ENCODE measurements at regions of chr5 and their contacts with region 1.

Region 1: GRCh38 chr5:132238169-132238744 is 10.6 kb upstream of the P4HA2 start:
- DNase-seq: peak; percentile 71 to 89 (median 81)
- H3K4me3 ChIP-seq: no peak overlapping the region
- H3K27ac ChIP-seq: no peak overlapping the region
- H3K4me1 ChIP-seq: no peaks in the 10 kb centered on the region
- H3K27me3 ChIP-seq: no peaks in the 10 kb centered on the region

Region 2: DNA sequence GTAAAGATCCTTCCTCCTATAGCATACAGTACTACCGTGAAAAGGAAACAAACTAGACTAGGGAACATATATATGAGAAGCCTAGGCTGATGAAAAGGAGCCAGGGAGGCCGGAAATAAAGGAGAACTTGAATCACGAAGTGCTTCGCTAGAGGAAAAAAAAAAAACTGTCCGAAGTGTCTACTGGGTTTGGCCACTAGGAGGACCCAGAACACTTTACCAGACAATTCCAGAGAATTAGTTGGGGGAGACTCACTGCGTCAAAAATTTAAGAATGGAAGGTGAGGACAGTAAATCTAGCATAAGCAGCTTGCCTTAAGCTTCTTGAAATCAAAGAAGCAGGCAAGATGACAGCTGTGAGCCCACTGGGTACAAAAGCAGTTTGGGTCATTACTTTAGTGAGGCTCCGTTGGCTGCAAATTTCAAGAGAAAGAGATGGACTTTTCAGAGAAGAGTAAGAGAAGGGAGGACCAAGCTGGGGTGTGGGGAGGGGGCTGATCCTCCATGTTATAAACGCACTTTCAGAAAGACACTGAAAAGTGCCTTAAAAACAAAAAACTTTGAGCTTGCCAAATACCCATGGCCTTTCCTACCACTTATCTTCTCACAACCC is 58.0 kb before region 1 on chr5:
- CTCF ChIA-PET with region 1: interaction called, 12 read pairs
- POLR2A ChIA-PET with region 1: no interaction called
- DNase-seq: peak; percentile 63 to 81 (median 78)
- H3K4me3 ChIP-seq: no peak overlapping the region
- H3K27ac ChIP-seq: peak overlapping the region in 1 of 2 experiments; percentile 54
- H3K4me1 ChIP-seq: peaks cover 0 to 21% (median 13%) of the 10 kb centered on the region in 4 experiments
- H3K27me3 ChIP-seq: no peaks in the 10 kb centered on the region

Region 3: GRCh38 chr5:132225165-132226032 is 12.9 kb before region 1 on chr5:
- CTCF ChIA-PET with region 1: interaction called, 19 read pairs
- POLR2A ChIA-PET with region 1: interaction called, 3 read pairs
- DNase-seq: peak in 2 of 3 donors; percentile 9 to 25
- H3K4me3 ChIP-seq: no peak overlapping the region
- H3K27ac ChIP-seq: no peak overlapping the region
- H3K4me1 ChIP-seq: peaks cover 0 to 23% (median 19%) of the 10 kb centered on the region in 4 experiments
- H3K27me3 ChIP-seq: peaks cover 0 to 20% (median 13%) of the 10 kb centered on the region in 5 experiments

Region 4: DNA sequence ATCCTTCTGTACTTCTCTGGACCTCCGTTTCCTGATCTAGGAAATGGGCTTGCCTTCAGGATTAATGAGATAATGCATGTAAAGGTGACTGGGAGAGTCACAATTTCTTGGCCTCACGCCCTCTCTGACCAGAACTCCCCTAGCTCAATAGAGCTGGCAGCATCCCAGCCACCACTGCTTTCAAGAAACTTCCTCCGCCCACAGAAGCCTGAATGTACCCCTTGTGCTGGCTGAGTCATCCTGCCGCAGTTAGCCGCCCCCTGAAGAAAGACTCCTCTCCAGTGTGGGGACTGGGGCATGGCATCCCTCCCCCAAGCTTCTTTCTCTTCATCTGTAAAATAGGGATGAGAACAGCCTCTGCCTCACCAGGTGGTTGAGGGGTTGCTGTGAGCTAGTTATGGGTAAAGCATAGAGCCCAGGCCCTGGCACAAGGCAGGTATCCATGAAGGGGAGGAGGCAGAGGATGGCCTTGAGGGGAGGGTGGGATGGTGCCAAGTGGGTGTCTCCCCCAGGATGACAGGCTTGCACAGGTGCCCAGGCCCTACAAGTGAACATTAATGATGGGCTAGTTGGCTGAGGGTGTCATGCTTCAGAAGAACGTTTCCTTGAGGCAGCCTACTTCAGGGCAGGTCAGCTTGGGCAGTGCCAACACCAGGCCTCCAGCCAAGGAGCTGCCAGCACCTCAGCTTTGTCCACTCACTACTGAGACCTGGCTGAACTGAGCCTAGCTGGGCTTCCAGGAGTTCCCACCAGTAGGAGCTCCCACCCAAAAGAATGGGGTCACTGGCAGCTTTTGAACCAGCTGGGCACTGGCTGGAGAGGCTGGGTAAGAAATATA is 22.7 kb after region 1 on chr5:
- CTCF ChIA-PET with region 1: interaction called, 24 read pairs
- POLR2A ChIA-PET with region 1: no interaction called
- DNase-seq: peak; percentile 72 to 91 (median 89)
- H3K4me3 ChIP-seq: peak overlapping the region in 1 of 7 experiments; percentile 1
- H3K27ac ChIP-seq: no peak overlapping the region
- H3K4me1 ChIP-seq: peaks cover 2 to 54% (median 40%) of the 10 kb centered on the region in 4 experiments
- H3K27me3 ChIP-seq: peaks cover 0 to 20% (median 12%) of the 10 kb centered on the region in 5 experiments

Region 5: DNA sequence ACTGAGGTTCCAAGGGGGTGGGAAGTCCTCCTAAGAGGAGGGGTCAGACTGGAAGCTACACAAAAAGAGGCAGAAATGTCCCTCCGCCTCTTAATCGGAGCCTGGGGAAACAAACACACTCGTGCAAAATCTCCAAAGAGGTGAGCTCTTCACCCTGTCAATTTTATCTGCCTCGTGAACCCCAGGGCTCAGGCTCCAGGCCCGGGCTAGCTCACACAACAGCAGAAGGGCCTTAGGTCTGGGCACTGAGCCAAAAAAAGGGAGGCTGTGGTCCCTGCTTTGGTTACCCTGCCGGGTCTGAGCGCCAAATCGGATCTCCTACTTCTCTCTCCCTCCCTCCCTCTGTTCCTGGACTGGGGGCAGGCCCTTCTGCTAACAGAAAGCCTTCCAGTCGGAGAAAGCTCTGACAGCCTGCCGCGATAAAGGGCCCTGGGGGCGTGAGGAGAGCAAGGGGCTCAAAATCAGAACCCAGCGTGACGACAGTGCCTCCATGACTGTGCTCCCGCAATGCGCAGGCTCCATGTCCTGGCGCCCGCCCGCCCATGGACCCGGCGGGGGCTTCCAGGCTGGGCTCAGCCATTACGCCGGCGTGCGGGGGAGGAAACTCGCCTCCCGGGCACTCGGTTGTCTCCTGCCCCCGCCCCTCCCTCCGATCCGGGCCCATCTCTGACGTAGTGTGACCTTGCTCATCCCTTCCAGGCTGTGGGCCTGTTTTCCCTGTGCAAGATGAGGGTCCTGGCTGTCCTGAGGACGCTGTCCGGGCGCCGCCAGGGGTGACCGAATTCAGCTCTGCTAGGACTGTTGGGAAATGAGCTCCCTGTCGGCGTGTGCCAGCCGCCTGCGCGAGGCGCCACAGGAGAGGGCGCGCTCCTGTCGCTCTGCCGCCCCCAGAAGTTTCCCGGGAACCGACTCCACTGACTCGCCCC is 55.1 kb after region 1 on chr5:
- CTCF ChIA-PET with region 1: interaction called, 12 read pairs
- POLR2A ChIA-PET with region 1: interaction called, 3 read pairs
- DNase-seq: peak; percentile 84 to 93 (median 93)
- H3K4me3 ChIP-seq: peak overlapping the region; percentile 24 to 88 (median 68)
- H3K27ac ChIP-seq: peak overlapping the region; percentile 53 to 78
- H3K4me1 ChIP-seq: peaks cover 14 to 43% (median 36%) of the 10 kb centered on the region in 4 experiments
- H3K27me3 ChIP-seq: peaks cover 0 to 2% (median 0%) of the 10 kb centered on the region in 5 experiments

Measured in common myeloid progenitor, CD34-positive (primary cell).